ENCODE measurements at regions of chr3 and their contacts with region 1.

Region 1: GRCh38 chr3:10115326-10116137 is at the start of gene BRK1:
- DNase-seq: peak; percentile 98
- ATAC-seq: peak; percentile 98
- H3K4me3 Mint-ChIP-seq: peak within 1 kb of the TSS; percentile 96
- H3K27ac Mint-ChIP-seq: peak within 1 kb of the TSS; percentile 92
- H3K4me1 Mint-ChIP-seq: peaks cover 35% of the 10 kb centered on the region
- H3K27me3 Mint-ChIP-seq: no peaks in the 10 kb centered on the region
- total RNA-seq, gene BRK1: 83.4 to 86.6 TPM

Region 2: DNA sequence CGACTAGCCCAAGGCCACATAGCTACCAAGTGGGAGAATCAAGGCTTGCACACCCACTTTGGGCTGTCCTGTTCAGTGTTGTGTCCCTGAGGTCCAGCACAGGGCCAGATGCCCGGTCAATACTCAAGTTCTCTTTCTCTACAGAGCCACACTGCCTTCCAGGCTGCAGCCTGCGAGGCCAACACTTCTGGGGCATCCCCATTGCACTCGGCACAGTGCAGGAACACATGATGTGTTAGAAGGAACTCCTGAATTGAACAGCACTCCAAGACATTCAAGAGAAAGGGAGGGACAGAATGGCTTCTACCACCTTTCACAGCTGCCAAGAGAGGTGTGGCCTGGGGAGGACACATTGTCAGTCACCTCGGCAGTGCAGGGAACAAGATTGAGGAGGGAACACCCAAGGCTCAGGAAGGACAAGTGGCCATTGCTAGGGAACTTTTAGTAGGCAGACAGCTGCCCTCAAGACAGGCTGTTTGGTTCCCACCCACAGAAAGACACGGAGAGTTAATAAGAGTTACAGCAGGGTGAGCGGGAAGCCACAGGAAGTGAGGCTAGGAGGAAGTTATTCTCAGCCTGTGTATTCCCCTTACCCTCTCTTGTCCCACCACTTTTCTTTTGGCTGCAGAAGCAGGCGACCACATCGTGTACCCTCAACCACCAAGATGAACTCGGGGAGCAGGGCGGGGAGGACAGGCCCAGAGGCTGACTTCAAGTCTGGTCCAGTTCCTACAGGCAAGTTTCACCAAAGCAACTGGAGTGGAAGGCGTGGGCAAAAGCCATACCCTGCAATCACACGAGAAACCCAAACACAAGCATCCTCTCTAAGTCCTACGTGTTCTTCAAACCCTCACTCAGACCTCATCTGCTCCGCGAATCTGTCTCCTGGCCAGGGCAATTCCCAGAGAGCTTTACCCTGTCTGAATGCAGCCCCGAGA is 935.4 kb before region 1 on chr3:
- CTCF ChIA-PET with region 1: no interaction called
- POLR2A ChIA-PET with region 1: no interaction called
- intact Hi-C with region 1: no loop called
- DNase-seq: peak; percentile 23
- ATAC-seq: peak; percentile 67
- H3K4me3 Mint-ChIP-seq: peak overlapping the region; percentile 58
- H3K27ac Mint-ChIP-seq: peak overlapping the region; percentile 76
- H3K4me1 Mint-ChIP-seq: peaks cover 21% of the 10 kb centered on the region
- H3K27me3 Mint-ChIP-seq: no peaks in the 10 kb centered on the region

Region 3: GRCh38 chr3:9749645-9750555 is 365.6 kb before region 1 on chr3 and contains the start of gene OGG1:
- CTCF ChIA-PET with region 1: no interaction called
- POLR2A ChIA-PET with region 1: no interaction called
- intact Hi-C with region 1: loop called in 1 of 2 experiments (anchors 1 kb)
- DNase-seq: peak; percentile 98
- ATAC-seq: peak; percentile 94
- H3K4me3 Mint-ChIP-seq: peak within 1 kb of the TSS; percentile 87
- H3K27ac Mint-ChIP-seq: peak within 1 kb of the TSS; percentile 91
- H3K4me1 Mint-ChIP-seq: peaks cover 46% of the 10 kb centered on the region
- H3K27me3 Mint-ChIP-seq: no peaks in the 10 kb centered on the region
- total RNA-seq, gene OGG1: 36.4 to 61.6 TPM

Region 4: DNA sequence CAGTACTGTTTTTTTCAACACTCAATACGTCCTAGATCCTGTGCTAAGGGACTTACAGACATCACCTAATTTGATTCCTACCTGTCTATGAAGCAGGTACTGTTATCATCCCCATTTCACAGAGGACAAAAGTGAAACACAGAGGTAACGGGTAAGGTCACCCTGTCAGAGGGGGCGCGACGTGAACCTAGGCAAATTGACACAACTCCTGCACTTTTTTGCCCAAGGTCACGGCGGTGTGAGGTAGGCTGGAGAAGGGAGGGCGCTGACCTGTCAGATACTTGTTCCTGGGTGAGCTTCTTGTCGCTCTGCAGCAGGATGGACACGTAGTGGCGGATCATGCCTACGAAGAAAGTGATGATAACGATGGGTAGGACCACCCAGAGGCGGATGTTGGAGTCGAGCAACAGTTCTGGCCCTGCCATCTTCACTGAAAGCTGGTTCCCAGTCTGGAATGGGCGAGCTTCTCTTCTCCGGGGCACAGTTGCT is 129.3 kb before region 1 on chr3:
- CTCF ChIA-PET with region 1: no interaction called
- POLR2A ChIA-PET with region 1: no interaction called
- intact Hi-C with region 1: loop called in 1 of 2 experiments (anchors 1 kb)
- DNase-seq: no peak
- ATAC-seq: peak; percentile 31
- H3K4me3 Mint-ChIP-seq: peak overlapping the region; percentile 94
- H3K27ac Mint-ChIP-seq: peak overlapping the region; percentile 98
- H3K4me1 Mint-ChIP-seq: peaks cover 32% of the 10 kb centered on the region
- H3K27me3 Mint-ChIP-seq: no peaks in the 10 kb centered on the region

Region 5: DNA sequence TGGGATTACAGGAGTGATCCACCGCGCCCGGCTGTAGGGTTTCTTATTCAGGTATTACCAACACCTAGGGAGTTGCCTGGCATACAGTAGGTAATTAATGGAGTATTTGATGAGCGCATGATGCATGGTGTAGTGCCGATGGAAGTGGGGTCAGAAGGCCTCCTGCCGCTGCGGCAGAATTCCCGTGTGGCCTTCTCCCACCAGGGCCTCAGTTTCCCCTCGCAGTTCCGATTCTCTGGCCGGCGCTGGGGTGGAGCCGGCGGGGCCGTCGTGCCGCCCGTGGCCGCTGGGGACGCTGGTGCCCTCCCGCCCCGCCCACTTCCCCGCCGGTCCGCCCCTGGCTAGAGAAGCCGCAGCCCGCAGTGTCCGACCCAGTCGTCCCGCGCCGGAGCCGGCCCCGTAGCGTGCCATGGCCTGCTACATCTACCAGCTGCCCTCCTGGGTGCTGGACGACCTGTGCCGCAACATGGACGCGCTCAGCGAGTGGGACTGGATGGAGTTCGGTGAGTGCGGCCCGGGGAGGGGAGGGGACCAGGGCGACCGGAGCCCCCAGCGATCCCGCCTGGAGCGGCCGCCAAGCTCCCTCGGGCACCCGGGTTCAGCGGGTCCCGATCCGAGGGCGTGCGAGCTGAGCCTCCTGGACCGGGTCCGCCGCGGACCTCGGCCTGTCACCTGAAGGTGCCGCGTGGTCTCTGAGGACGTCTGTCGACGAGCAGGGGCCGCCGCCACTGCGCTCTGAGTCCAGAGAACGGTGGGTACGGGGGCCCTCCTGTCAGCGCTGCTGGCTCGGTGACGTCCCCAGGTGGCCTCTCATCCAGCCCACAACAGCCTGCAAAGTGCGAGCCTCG is 49.2 kb after region 1 on chr3 and contains the start of gene IRAK2:
- CTCF ChIA-PET with region 1: no interaction called
- POLR2A ChIA-PET with region 1: no interaction called
- intact Hi-C with region 1: loop called in 1 of 2 experiments (anchors 2 kb)
- DNase-seq: peak; percentile 83
- ATAC-seq: peak; percentile 79
- H3K4me3 Mint-ChIP-seq: peak within 1 kb of the TSS; percentile 70
- H3K27ac Mint-ChIP-seq: peak within 1 kb of the TSS; percentile 13
- H3K4me1 Mint-ChIP-seq: peaks cover 21% of the 10 kb centered on the region
- H3K27me3 Mint-ChIP-seq: no peaks in the 10 kb centered on the region
- total RNA-seq, gene IRAK2: 3.9 to 4.0 TPM

Region 6: DNA sequence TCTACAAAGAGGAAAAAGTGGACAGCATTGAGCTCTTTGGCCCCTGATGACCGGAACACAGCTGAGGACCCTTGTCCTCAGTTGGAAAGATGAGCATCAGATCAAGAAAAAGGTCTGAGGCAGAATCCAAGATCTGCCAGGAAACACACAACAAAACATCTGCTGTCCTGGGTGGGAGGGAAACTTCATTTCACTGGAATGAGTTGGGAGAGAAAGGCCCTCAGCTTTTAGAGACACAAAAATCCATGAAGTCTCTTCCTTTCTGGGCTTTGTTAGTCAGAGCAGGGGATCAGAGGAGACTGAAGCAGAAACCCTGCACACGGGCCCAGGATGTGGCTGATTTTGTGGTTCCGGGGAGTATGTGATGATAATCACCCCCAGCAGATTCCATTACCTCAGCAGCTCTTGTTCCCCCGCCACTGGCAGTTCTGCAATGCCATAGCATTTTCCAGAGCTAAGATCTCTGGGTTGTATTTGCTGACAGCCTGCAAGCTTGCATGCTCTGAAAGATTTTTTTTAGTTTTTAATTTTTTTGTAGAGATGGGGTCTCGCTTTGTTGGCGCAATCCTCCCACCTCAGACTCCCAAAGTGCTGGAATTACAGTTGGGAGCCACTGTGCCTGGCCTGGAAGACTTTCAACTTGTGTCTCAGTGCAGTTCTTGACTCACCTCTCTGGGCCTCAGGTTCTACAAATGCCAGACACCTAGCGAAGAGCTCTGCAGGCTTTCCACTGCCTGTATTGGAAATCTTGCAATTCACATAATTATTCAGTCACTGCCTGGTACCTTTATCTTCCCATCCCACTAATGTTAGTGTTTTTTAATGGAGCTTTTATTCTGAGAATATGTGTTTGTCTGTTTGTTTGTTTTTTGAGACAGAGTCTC is 126.9 kb after region 1 on chr3:
- CTCF ChIA-PET with region 1: no interaction called
- POLR2A ChIA-PET with region 1: no interaction called
- intact Hi-C with region 1: loop called in 1 of 2 experiments (anchors 5 kb)
- DNase-seq: peak; percentile 91
- ATAC-seq: peak; percentile 94
- H3K4me3 Mint-ChIP-seq: peak overlapping the region; percentile 42
- H3K27ac Mint-ChIP-seq: peak overlapping the region; percentile 93
- H3K4me1 Mint-ChIP-seq: peaks cover 62% of the 10 kb centered on the region
- H3K27me3 Mint-ChIP-seq: no peaks in the 10 kb centered on the region